Dendritic cell treated with granulocyte-macrophage colony-stimulating factor and Interleukin-4, amounts not matched to agents 40 ng/mL and 50 ng/mL, for 4 days (primary cell): ENCODE measurements at regions of chr18 and their contacts with region 1.

Region 1: DNA sequence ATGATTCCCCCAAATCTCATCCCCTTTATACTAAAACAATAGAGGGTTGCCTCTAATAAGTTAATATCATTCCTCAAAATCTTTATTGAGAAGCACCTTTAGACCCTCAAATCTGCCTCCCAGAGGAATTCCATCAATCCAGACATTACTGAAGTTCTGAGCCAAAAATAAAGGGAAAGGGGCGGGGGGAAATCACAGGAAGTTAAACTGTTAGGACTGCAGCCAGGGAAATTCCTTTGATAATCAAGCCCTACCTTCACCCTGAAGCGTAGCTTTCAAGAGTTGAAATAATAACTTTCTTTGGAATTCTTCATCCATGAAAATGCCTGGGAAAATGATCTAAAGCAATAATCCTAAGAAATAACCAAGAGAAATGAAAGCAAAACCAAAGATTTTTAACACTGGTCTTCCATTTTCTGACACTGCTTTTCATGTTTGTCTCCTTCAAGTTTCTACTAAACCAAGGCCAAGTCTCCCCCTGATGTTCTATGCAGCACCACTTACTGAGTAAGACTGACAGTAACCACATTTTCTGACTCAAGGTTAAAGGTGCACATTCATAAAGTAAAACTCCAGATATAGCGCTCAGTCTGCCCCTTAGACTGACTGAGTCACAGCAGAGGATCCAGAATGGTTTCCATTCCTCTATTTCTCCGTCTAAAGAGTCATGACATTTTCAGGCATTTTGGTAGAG is 78.2 kb downstream of the TCF4 start:
- H3K4me3 Mint-ChIP-seq: peak overlapping the region; percentile 40
- H3K27ac Mint-ChIP-seq: peak overlapping the region; percentile 80
- H3K4me1 Mint-ChIP-seq: peaks cover 22% of the 10 kb centered on the region
- H3K27me3 Mint-ChIP-seq: no peaks in the 10 kb centered on the region

Region 2: GRCh38 chr18:55243857-55244256 is 265.9 kb before region 1 on chr18:
- intact Hi-C with region 1: loop called (anchors 10 kb)
- H3K4me3 Mint-ChIP-seq: no peak overlapping the region
- H3K27ac Mint-ChIP-seq: no peak overlapping the region
- H3K4me1 Mint-ChIP-seq: peaks cover 27% of the 10 kb centered on the region
- H3K27me3 Mint-ChIP-seq: no peaks in the 10 kb centered on the region

Region 3: DNA sequence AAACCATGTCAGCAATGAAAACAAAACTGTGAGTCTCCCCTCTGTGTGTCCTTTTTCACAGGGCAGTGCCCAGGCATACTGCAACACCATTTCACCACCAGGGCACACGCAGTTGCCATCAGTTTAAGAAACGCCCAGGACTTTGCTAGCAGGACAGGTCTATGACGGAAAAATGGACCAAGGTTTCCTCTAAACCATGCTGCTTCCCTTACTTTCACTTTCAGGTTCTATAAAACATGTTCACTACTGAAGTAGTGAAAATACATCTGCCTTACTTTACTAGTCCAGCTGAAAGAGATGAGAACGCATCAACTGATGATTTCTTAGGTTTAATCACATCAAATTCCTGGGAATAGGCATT is 32.3 kb before region 1 on chr18:
- intact Hi-C with region 1: loop called (anchors 5 kb)
- H3K4me3 Mint-ChIP-seq: peak overlapping the region; percentile 75
- H3K27ac Mint-ChIP-seq: peak overlapping the region; percentile 70
- H3K4me1 Mint-ChIP-seq: peaks cover 32% of the 10 kb centered on the region
- H3K27me3 Mint-ChIP-seq: no peaks in the 10 kb centered on the region

Region 4: DNA sequence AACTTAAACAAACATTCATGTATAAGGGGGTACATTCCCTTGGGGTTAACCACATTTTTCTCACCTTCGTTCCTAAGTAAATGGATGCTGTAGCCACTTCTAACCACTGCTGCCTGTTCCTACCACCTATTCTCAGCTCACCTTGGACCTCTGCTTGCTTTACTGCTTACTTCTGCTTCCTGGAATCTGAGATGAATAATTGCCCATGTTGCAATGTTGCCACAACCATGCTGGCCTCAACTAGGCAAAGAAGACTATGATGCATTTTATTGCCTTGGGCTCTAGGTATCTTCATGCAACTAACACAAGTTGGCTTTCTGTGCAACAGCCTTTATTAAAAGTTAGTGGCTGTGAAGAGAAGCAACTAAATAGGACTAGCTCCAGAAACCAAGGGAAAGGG is 184.5 kb after region 1 on chr18:
- intact Hi-C with region 1: no loop called
- H3K4me3 Mint-ChIP-seq: no peak overlapping the region
- H3K27ac Mint-ChIP-seq: no peak overlapping the region
- H3K4me1 Mint-ChIP-seq: no peaks in the 10 kb centered on the region
- H3K27me3 Mint-ChIP-seq: no peaks in the 10 kb centered on the region